ENCODE measurements at regions of chr4 and their contacts with region 1.

Region 1: DNA sequence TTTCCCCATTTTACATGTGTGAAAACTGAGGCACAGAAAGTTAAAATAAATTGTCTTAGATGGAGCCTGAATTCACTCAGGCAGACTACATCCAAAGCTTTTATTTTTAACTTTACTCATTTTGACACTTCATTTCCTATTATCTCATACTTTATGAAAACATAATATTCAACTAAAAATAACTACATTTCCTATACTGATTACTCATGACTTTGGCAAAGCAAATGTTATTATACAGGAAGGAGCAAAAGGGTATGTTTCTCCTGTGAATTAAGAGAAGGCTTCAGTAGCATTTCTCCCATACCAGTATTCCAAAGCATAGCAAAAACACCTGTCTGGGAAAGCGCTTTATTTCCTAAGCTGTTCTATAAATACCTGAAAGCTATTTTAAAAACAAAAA is 178.6 kb downstream of the ADAMTS3 start:
- DNase-seq: peak; percentile 90
- H3K4me3 ChIP-seq: no peak overlapping the region
- H3K27ac ChIP-seq: peak overlapping the region; percentile 51
- H3K4me1 ChIP-seq: peaks cover 27% of the 10 kb centered on the region
- H3K27me3 ChIP-seq: no peaks in the 10 kb centered on the region
- CTCF ChIP-seq: no peak
- POLR2A ChIP-seq: no peak

Region 2: GRCh38 chr4:72418458-72418857 is 28.0 kb after region 1 on chr4:
- CTCF ChIA-PET with region 1: interaction called, 7 read pairs
- POLR2A ChIA-PET with region 1: no interaction called
- dilution Hi-C with region 1: no loop called
- intact Hi-C with region 1: loop called (anchors 2 kb)
- DNase-seq: peak; percentile 89
- H3K4me3 ChIP-seq: no peak overlapping the region
- H3K27ac ChIP-seq: peak overlapping the region; percentile 45
- H3K4me1 ChIP-seq: peaks cover 11% of the 10 kb centered on the region
- H3K27me3 ChIP-seq: no peaks in the 10 kb centered on the region
- CTCF ChIP-seq: no peak
- POLR2A ChIP-seq: no peak

Measured in endothelial cell of umbilical vein (primary cell).